A549 (cell line): ENCODE measurements at regions of chr2 and their contacts with region 1.

Region 1: DNA sequence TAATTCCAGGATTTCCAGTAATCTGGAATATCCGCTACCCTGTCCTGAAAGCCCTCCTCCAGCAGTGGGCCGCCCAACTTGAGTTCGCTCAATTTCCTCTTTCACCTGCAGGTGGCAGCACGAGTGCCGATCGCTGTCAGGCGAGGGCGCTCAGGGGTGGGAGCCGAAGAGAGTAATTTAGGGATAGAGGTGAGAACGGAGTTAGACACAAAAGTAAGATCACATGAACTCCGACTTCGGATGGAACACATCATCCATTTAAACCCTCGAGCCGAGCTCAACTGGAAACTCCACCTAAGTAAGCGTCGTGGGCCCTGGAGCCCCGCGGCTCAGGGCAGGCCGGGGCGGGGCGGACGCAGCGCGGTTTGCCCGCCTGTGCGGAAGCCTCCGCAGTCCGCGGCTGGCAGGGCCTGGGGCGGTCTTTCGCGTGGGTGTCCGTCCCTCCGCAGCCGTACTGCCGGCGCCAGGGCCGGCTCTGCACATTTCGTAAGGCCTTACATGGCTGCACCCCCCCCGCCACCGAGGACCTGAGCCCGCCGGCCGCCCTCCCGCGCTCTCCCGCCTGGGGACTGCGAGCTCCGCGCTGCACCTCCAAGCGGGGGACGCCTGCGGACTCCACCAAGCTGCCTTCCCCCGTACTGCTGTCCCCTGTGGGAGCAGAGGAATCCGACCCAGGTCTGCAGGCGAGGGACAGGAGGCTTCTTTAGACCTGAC is 61.2 kb downstream of the SEMA4F start:
- DNase-seq: peak; percentile 81 to 82
- ATAC-seq: peak; percentile 90 to 97
- H3K4me3 ChIP-seq: peak overlapping the region; percentile 47
- H3K27ac ChIP-seq: peak overlapping the region; percentile 13 to 83; a peak in 4 of 6 replicates
- H3K4me1 ChIP-seq: no peaks in the 10 kb centered on the region
- CTCF ChIP-seq: peak; percentile 98
- EP300 ChIP-seq: no peak
- POLR2A ChIP-seq: no peak
- RAD21 ChIP-seq: peak; percentile 89 to 90

Region 2: GRCh38 chr2:74696829-74697228 is 18.4 kb before region 1 on chr2:
- CTCF ChIA-PET with region 1: interaction called, 43 read pairs
- POLR2A ChIA-PET with region 1: no interaction called
- DNase-seq: no peak
- ATAC-seq: no peak
- H3K4me3 ChIP-seq: no peak overlapping the region
- H3K27ac ChIP-seq: no peak overlapping the region
- H3K4me1 ChIP-seq: peaks cover 3% of the 10 kb centered on the region; the same call in 1 of the 3 replicates
- CTCF ChIP-seq: no peak
- EP300 ChIP-seq: no peak
- POLR2A ChIP-seq: no peak
- RAD21 ChIP-seq: no peak

Region 3: DNA sequence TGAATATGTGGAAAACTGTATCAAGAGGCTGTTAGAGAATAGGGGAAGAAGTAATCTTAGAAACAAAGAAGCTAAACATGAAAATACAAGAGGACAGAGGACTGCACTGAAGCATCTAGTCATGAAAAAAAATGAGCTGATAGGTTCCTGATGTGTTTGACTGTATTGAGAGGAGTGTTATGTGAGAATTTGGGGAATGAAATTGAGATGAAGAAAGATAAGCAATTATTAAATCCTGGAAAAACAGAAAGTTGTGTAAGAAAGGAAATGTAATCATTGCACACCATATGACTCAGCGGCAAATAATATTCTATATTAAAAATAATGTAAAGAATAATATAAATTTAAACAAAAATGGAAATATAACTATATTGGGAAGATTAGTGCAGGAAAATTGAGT is 10.1 kb after region 1 on chr2:
- CTCF ChIA-PET with region 1: interaction called, 42 read pairs
- POLR2A ChIA-PET with region 1: no interaction called
- DNase-seq: no peak
- ATAC-seq: no peak
- H3K4me3 ChIP-seq: no peak overlapping the region
- H3K27ac ChIP-seq: no peak overlapping the region
- H3K4me1 ChIP-seq: no peaks in the 10 kb centered on the region
- CTCF ChIP-seq: no peak
- EP300 ChIP-seq: no peak
- POLR2A ChIP-seq: no peak
- RAD21 ChIP-seq: no peak

Region 4: GRCh38 chr2:74746467-74746866 is 31.2 kb after region 1 on chr2:
- CTCF ChIA-PET with region 1: interaction called, 26 read pairs
- POLR2A ChIA-PET with region 1: no interaction called
- DNase-seq: no peak
- ATAC-seq: no peak
- H3K4me3 ChIP-seq: no peak overlapping the region
- H3K27ac ChIP-seq: no peak overlapping the region
- H3K4me1 ChIP-seq: peaks cover 5% of the 10 kb centered on the region
- CTCF ChIP-seq: no peak
- EP300 ChIP-seq: no peak
- POLR2A ChIP-seq: no peak
- RAD21 ChIP-seq: no peak

Region 5: GRCh38 chr2:74845217-74846011 is 130.2 kb after region 1 on chr2:
- CTCF ChIA-PET with region 1: interaction called, 13 read pairs
- POLR2A ChIA-PET with region 1: no interaction called
- DNase-seq: peak; percentile 55 to 76
- ATAC-seq: peak; percentile 96 to 97
- H3K4me3 ChIP-seq: no peak overlapping the region
- H3K27ac ChIP-seq: peak overlapping the region; percentile 5 to 70; a peak in 5 of 6 replicates
- H3K4me1 ChIP-seq: peaks cover 25% of the 10 kb centered on the region
- CTCF ChIP-seq: no peak
- EP300 ChIP-seq: no peak
- POLR2A ChIP-seq: no peak
- RAD21 ChIP-seq: no peak